SK-N-SH (cell line): ENCODE measurements at regions of chr6 and their contacts with region 1.

Region 1: GRCh38 chr6:109440331-109441068 is at the starts of genes PPIL6 and SMPD2:
- DNase-seq: peak; percentile 98
- H3K4me3 ChIP-seq: peak within 1 kb of the TSS; percentile 88 to 90
- H3K27ac ChIP-seq: peak within 1 kb of the TSS; percentile 76 to 78
- H3K4me1 ChIP-seq: peaks cover 0 to 23% of the 10 kb centered on the region in 2 experiments; a peak in 1 of 4 replicates
- H3K27me3 ChIP-seq: no peaks in the 10 kb centered on the region
- CTCF ChIP-seq: peak; percentile 38; the same call in 1 of the 2 replicates
- EP300 ChIP-seq: 0 out of 4 replicates have a peak, but pooled peaks of 1 of the 2 experiments have one; percentile 49
- RAD21 ChIP-seq: peak; percentile 30
- polyA plus RNA-seq, gene PPIL6: 1.1 and 1.9 TPM in 2 replicates
- polyA plus RNA-seq, gene SMPD2: 9.7 and 11.4 TPM in 2 replicates

Region 2: DNA sequence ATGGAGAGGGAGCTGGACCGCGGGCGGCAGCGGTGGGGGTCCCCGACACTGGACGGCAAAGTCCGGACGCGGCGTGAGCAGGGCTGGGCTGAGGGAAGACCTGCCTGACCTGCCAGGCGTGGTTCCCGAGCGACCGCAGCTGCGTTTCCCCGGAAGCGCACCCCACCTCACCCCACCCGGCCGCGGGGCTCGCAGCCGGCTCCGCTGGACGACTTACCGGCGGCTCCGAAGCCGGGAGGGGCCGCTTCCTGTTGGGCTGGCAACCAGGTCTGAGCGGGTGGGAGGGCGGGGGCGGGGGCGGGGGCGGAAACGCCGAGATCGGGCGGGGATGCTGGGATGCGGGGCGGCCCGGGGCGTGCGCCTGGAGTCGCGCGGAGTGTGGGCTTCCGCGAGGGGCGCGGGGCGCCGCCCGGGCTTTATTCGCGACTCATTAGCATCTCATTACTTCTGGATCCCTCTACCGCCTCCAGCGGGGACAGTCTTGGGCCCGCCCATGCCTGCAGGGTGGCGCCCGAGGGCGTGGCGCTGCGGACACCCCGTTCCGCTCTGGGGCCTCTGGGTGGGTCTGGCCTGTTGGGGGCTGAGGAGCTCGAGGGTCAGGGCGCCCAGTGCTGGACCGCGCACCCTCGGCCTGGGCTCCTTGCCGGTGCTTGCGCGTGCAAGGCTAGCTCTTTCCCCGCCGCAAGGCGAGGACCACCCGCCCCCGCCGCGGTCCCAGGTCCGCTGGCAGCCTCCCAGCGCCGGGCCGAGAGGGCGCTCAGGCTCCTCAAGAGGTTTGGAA is 15.2 kb after region 1 on chr6 and contains the start of gene MICAL1:
- CTCF ChIA-PET with region 1: interaction called, 47 read pairs
- POLR2A ChIA-PET with region 1: interaction called, 43 read pairs
- DNase-seq: peak; percentile 94
- H3K4me3 ChIP-seq: peak within 1 kb of the TSS; percentile 80 to 97
- H3K27ac ChIP-seq: peak within 1 kb of the TSS; percentile 51 to 90
- H3K4me1 ChIP-seq: peaks cover 0 to 25% of the 10 kb centered on the region in 2 experiments; a peak in 3 of 4 replicates
- H3K27me3 ChIP-seq: no peaks in the 10 kb centered on the region
- CTCF ChIP-seq: peak; percentile 40
- EP300 ChIP-seq: no peak
- RAD21 ChIP-seq: no peak
- polyA plus RNA-seq, gene MICAL1: 45.6 and 56.3 TPM in 2 replicates